Mammary epithelial cell (primary cell): ENCODE measurements at regions of chr12 and their contacts with region 1.

Region 1: GRCh38 chr12:57005980-57006808 is at the start of gene ZBTB39:
- DNase-seq: peak; percentile 42
- H3K4me3 ChIP-seq: peak within 1 kb of the TSS; percentile 72 to 76 (median 73)
- H3K27ac ChIP-seq: no peak within 1 kb of the TSS
- H3K4me1 ChIP-seq: peaks cover 5% of the 10 kb centered on the region
- H3K27me3 ChIP-seq: no peaks in the 10 kb centered on the region
- CTCF ChIP-seq: peak; percentile 8 to 54
- total RNA-seq, gene ZBTB39: 5.7 to 8.0 TPM

Region 2: DNA sequence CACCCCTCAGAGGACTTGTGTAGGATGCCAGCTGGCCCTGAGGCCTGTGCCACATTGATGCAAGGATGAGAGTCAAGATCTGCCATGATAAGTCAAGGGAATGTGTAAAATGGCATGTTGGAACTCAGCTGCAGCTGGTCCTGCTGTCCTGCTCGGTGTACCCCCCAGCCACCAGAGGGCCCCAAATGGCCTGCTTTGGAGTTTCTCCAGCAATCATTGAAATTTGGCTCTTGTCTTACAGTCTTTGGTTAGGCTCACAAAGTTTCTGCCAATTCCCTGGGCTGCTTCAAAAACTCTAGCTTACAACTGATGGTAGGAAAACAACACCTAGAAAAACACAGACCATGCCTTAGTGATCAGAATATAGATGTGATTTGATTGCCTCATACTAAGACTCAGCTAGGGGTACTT is 166.3 kb before region 1 on chr12:
- CTCF ChIA-PET with region 1: no interaction called
- dilution Hi-C with region 1: no loop called
- in situ Hi-C with region 1: no loop called
- intact Hi-C with region 1: loop called (anchors 1 kb)
- DNase-seq: peak; percentile 56
- H3K4me3 ChIP-seq: no peak overlapping the region
- H3K27ac ChIP-seq: no peak overlapping the region
- H3K4me1 ChIP-seq: peaks cover 34% of the 10 kb centered on the region
- H3K27me3 ChIP-seq: no peaks in the 10 kb centered on the region
- CTCF ChIP-seq: peak; percentile 77 to 85

Region 3: GRCh38 chr12:56991319-56992246 is 14.6 kb before region 1 on chr12:
- CTCF ChIA-PET with region 1: no interaction called
- dilution Hi-C with region 1: no loop called
- in situ Hi-C with region 1: no loop called
- intact Hi-C with region 1: no loop called
- DNase-seq: no peak
- H3K4me3 ChIP-seq: no peak overlapping the region
- H3K27ac ChIP-seq: no peak overlapping the region
- H3K4me1 ChIP-seq: peaks cover 8% of the 10 kb centered on the region
- H3K27me3 ChIP-seq: no peaks in the 10 kb centered on the region
- CTCF ChIP-seq: no peak

Region 4: DNA sequence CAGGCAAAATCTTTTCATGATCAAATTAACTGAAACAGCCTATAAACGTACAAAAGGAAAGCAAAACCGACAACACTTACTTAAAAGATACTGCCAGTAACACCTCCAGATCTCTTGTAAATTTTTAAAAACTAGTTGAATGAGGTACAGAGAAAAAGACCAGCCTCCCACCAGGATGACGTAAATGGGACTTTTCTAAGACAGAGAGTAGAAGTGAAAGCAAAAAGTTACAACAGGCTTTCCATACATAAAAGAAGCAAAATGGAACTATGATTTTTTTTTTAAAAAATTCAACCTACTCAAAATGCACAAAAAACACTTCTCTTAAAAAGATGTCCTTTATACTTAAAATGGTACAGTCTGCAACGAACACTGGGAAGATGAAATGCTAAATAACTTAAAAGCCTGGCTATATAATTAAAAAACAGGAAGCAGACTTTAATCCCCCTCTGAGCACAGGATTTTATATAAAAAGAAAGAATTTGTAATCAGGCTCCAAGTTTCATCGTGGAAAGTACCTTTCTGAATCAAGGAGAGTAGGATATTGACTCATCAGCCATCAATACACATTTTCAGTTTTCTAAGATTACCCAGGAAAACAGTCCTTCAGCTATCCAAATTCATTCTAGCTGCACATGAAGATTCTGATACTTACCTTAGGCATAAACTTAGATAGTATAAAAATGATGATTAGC is 57.9 kb after region 1 on chr12:
- CTCF ChIA-PET with region 1: no interaction called
- dilution Hi-C with region 1: loop called (anchors 5 kb)
- in situ Hi-C with region 1: loop called in 1 of 2 experiments (anchors 10 kb)
- intact Hi-C with region 1: loop called (anchors 1 kb)
- DNase-seq: peak; percentile 21
- H3K4me3 ChIP-seq: no peak overlapping the region
- H3K27ac ChIP-seq: no peak overlapping the region
- H3K4me1 ChIP-seq: no peaks in the 10 kb centered on the region
- H3K27me3 ChIP-seq: no peaks in the 10 kb centered on the region
- CTCF ChIP-seq: no peak

Region 5: DNA sequence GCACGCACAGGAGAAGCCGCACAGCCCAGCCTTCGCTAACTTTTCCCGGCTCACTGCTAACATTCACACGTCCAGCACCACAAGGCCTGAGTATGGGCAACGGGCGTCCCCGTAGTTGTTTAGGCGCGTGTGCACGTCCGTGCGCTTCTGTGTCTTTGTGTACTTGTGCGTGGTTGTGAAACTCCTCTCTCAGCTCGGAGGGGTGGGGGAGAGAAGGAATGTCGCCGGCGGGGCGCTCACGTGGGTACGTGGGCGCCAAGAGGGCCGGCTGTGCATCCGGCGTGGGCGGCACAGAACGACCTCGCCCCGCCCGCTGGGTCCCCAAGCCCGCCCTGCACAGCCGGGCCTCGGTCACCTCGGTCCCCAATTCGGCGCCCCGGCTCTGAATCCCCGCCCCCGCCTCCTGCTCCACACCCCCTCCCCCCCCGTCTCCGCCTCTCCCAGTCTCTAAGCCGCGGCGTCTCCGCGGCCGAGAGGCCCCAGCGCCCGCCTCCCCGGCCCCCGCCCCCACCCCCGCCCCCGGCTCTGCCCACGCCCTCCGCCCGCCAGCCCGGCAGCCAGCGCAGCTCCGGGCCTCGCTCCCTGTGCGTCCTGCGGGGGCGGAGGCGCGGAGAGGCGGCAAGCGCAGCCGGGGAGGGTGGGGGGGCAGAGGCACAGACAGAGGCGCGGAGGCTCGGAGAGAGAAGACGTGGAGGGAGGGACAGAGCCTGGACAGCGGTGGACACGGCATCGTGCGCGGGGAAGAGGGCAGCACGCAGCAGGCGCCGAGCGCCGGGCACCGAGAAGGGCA is 82.5 kb after region 1 on chr12 and contains the start of gene NAB2:
- CTCF ChIA-PET with region 1: no interaction called
- dilution Hi-C with region 1: no loop called
- in situ Hi-C with region 1: no loop called
- intact Hi-C with region 1: loop called (anchors 1 kb)
- DNase-seq: peak; percentile 90
- H3K4me3 ChIP-seq: peak within 1 kb of the TSS; percentile 72 to 96 (median 88)
- H3K27ac ChIP-seq: peak within 1 kb of the TSS; percentile 97
- H3K4me1 ChIP-seq: peaks cover 60% of the 10 kb centered on the region
- H3K27me3 ChIP-seq: no peaks in the 10 kb centered on the region
- CTCF ChIP-seq: no peak
- total RNA-seq, gene NAB2: 33.8 to 35.3 TPM

Region 6: GRCh38 chr12:57175428-57176138 is 169.4 kb after region 1 on chr12:
- CTCF ChIA-PET with region 1: no interaction called
- dilution Hi-C with region 1: no loop called
- in situ Hi-C with region 1: loop called in 1 of 2 experiments (anchors 10 kb)
- intact Hi-C with region 1: no loop called
- DNase-seq: peak; percentile 95
- H3K4me3 ChIP-seq: peak overlapping the region in 2 of 3 experiments; percentile 28 to 31
- H3K27ac ChIP-seq: peak overlapping the region; percentile 5
- H3K4me1 ChIP-seq: peaks cover 30% of the 10 kb centered on the region
- H3K27me3 ChIP-seq: no peaks in the 10 kb centered on the region
- CTCF ChIP-seq: peak; percentile 86 to 91